Heart right ventricle (tissue), 16 donors: ENCODE measurements at regions of chrX and their contacts with region 1.

Region 1: DNA sequence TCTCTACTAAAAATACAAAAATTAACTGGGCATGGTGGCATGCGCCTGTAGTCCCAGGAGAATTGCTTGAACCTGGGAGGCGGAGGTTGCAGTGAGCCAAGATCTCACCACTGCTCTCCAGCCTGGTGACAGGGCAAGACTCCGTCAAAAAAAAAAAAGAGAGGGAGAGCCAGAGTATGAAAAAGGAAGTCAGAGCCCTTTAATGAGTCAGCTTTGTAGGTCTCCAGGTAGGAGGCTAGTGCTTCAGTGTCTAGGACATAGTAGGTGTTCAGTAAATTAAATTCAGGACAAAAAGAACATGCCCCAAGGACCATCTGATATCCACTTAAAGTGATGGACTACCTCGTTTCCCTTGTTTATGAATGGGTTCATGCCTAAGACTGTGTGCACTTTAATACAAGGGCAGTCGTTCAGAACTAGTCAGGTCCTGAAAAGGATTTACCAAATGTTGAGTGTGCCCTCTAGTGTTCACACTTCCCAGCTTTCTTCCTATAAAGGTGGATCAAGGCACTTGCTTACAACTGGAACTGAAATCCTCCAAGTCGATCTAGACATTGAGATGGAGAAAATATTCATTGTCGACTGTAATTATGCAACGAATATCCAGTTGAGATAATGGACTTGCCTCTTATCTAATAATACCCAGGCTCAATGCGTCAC is 29.0 kb downstream of the F9 start:
- DNase-seq: peak in 1 of 2 donors; percentile 21
- ATAC-seq: peak in 2 of 8 donors; percentile 47 to 49
- H3K4me3 ChIP-seq: no peak overlapping the region
- H3K27ac ChIP-seq: no peak overlapping the region
- H3K4me1 ChIP-seq: peaks cover 0 to 8% (median 0%) of the 10 kb centered on the region in 9 donors
- H3K27me3 ChIP-seq: peaks cover 0 to 20% (median 0%) of the 10 kb centered on the region in 7 donors
- CTCF ChIP-seq: peak in 7 of 9 donors; percentile 43 to 60 (median 52)

Region 2: GRCh38 chrX:138775517-138775916 is 784.0 kb before region 1 on chrX:
- intact Hi-C with region 1: loop called in 8 of 10 experiments (anchors 2 to 10 kb)
- DNase-seq: no peak
- ATAC-seq: no peak
- H3K4me3 ChIP-seq: no peak overlapping the region
- H3K27ac ChIP-seq: no peak overlapping the region
- H3K4me1 ChIP-seq: no peaks in the 10 kb centered on the region
- H3K27me3 ChIP-seq: no peaks in the 10 kb centered on the region
- CTCF ChIP-seq: peak in 8 of 9 donors; percentile 6 to 55 (median 47)

Region 3: DNA sequence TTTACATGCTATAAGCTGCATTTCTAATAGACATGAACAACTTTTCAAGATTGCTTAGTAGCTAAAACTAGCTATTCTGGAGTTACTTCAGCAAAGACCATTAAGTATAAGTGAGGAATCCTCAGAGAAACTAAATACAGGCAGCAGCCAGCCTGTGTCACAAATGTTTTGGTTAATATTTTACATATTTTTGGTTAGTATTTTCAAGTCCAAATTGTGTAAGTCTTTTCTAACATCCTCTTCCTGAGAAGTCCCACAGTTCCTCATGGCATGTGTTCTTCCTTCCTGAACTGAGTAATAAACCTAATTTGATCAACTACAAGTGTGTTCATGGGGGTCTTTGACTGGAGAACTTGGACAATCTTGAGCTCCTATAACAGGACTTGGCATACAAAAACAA is 190.9 kb after region 1 on chrX:
- intact Hi-C with region 1: no loop called
- DNase-seq: no peak
- ATAC-seq: no peak
- H3K4me3 ChIP-seq: no peak overlapping the region
- H3K27ac ChIP-seq: no peak overlapping the region
- H3K4me1 ChIP-seq: no peaks in the 10 kb centered on the region
- H3K27me3 ChIP-seq: no peaks in the 10 kb centered on the region
- CTCF ChIP-seq: no peak